CD14-positive monocyte (primary cell): ENCODE measurements at regions of chr9 and their contacts with region 1.

Region 1: GRCh38 chr9:35945341-35946018 is 12.5 kb downstream of the OR2S2 start:
- DNase-seq: peak; percentile 21 to 43 (median 27)
- H3K4me3 ChIP-seq: peak overlapping the region in 1 of 3 experiments; percentile 17
- H3K4me3 Mint-ChIP-seq: peak overlapping the region in 1 of 2 donors; percentile 85
- H3K27ac ChIP-seq: no peak overlapping the region
- H3K27ac Mint-ChIP-seq: no peak overlapping the region
- H3K4me1 ChIP-seq: peaks cover 0 to 4% of the 10 kb centered on the region in 2 donors
- H3K4me1 Mint-ChIP-seq: peaks cover 4% of the 10 kb centered on the region
- H3K27me3 ChIP-seq: peaks cover 0 to 3% of the 10 kb centered on the region in 2 donors
- H3K27me3 Mint-ChIP-seq: peaks cover 0 to 6% (median 6%) of the 10 kb centered on the region in 3 donors
- CTCF ChIP-seq: peak; percentile 85

Region 2: DNA sequence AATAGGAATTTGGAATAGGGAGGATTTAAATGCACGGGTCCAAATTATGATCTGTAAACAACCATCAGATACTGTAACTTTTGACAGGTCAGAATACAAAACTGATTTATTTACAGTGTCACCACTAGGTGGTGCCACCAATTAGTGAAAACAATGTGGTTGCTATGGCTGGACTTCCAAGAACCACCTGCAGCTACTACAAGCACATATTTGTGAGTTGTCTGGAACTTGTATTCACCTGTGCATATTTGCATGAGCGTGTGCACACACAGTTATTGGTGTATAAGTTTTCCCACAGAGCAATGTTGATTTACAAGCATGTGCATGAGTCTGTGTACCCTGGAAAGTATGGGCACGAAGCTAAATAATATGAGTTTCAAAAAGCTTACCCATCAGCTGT is 42.4 kb before region 1 on chr9:
- intact Hi-C with region 1: loop called in 1 of 2 experiments (anchors 5 kb)
- DNase-seq: peak; percentile 30 to 54 (median 40)
- H3K4me3 ChIP-seq: no peak overlapping the region
- H3K4me3 Mint-ChIP-seq: no peak overlapping the region
- H3K27ac ChIP-seq: no peak overlapping the region
- H3K27ac Mint-ChIP-seq: no peak overlapping the region
- H3K4me1 ChIP-seq: peaks cover 20 to 22% of the 10 kb centered on the region in 2 donors
- H3K4me1 Mint-ChIP-seq: peaks cover 24% of the 10 kb centered on the region
- H3K27me3 ChIP-seq: peaks cover 0 to 2% of the 10 kb centered on the region in 2 donors
- H3K27me3 Mint-ChIP-seq: peaks cover 9 to 26% (median 17%) of the 10 kb centered on the region in 3 donors
- CTCF ChIP-seq: peak; percentile 89

Region 3: DNA sequence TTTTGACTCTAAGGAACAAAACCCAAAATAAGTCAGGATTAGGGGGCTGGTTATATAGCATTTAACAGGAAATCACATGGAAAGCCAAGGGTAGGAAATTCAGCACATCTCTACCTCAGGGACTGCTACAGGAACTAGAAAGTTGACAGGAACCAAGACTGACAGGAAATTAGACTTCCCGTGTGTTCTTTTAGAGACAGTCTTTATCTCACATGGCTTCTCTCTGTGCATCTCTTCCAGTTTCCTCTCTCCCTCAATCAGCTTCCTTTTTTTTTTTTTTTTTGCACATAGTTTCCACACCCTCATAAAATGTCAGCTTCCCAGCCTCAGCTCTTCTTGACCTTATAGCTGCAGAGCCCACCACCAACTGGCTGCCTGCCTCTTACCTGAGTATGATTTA is 96.0 kb after region 1 on chr9:
- intact Hi-C with region 1: no loop called
- DNase-seq: peak in 2 of 3 donors; percentile 16 to 55
- H3K4me3 ChIP-seq: no peak overlapping the region
- H3K4me3 Mint-ChIP-seq: peak overlapping the region in 1 of 2 donors; percentile 57
- H3K27ac ChIP-seq: peak overlapping the region in 1 of 2 donors; percentile 21
- H3K27ac Mint-ChIP-seq: peak overlapping the region in 6 of 7 donors; percentile 46 to 84 (median 73)
- H3K4me1 ChIP-seq: peaks cover 23 to 28% of the 10 kb centered on the region in 2 donors
- H3K4me1 Mint-ChIP-seq: peaks cover 49% of the 10 kb centered on the region
- H3K27me3 ChIP-seq: no peaks in the 10 kb centered on the region
- H3K27me3 Mint-ChIP-seq: peaks cover 0 to 3% (median 0%) of the 10 kb centered on the region in 3 donors
- CTCF ChIP-seq: no peak